CD8-positive, alpha-beta memory T cell (primary cell): ENCODE measurements at regions of chr19 and their contacts with region 1.

Region 1: DNA sequence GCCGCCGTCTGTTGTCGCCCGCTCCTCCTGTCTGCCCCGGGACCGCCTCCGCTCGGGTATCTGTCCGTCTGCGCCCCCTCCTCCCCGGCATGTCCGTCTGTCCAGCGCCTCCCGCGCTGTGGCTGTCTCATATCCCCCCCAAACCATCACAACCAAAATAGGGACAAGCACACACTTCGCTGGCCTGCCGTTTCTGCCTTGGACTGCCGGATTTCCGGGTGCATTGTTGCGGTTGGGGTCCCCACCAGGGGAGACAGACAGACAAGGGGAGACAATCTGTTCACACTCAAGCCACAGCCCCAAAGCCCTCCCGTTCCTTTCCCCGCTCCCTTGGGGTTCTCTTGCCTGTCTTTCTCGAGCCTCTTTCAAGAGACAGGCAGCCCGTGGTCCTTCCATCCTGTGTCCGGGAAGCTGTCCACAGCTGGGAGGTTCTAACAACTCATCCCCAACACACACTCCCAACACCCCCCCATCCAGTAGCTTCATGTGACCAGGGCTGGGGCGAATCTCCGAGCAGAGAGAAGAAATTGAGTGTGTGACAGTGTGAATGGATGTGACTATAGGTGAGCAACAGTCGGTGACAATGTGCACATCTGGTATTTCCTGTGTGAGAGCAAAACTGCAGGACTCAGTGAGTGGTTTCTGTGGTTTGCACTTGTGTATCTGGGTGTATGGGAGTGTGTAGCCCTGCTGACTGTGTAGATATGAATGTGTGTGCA is 16.5 kb upstream of the FOSB start:
- DNase-seq: peak; percentile 64 to 86 (median 77)
- H3K4me3 ChIP-seq: peak overlapping the region; percentile 87
- H3K4me3 Mint-ChIP-seq: peak overlapping the region; percentile 82 to 97 (median 91)
- H3K27ac ChIP-seq: peak overlapping the region; percentile 100
- H3K27ac Mint-ChIP-seq: peak overlapping the region; percentile 97 to 100 (median 100)
- H3K4me1 ChIP-seq: peaks cover 41% of the 10 kb centered on the region
- H3K4me1 Mint-ChIP-seq: peaks cover 55 to 67% (median 63%) of the 10 kb centered on the region in 3 donors
- H3K27me3 ChIP-seq: no peaks in the 10 kb centered on the region
- H3K27me3 Mint-ChIP-seq: peaks cover 0 to 13% of the 10 kb centered on the region in 2 donors

Region 2: GRCh38 chr19:45469132-45469944 is 18.0 kb after region 1 on chr19:
- CTCF ChIA-PET with region 1: interaction called, 15 read pairs
- POLR2A ChIA-PET with region 1: interaction called, 22 read pairs
- DNase-seq: peak; percentile 78 to 98 (median 93)
- H3K4me3 ChIP-seq: peak overlapping the region; percentile 96
- H3K4me3 Mint-ChIP-seq: peak overlapping the region; percentile 93 to 99 (median 95)
- H3K27ac ChIP-seq: peak overlapping the region; percentile 100
- H3K27ac Mint-ChIP-seq: peak overlapping the region; percentile 98 to 99 (median 99)
- H3K4me1 ChIP-seq: peaks cover 18% of the 10 kb centered on the region
- H3K4me1 Mint-ChIP-seq: peaks cover 26 to 53% (median 29%) of the 10 kb centered on the region in 3 donors
- H3K27me3 ChIP-seq: no peaks in the 10 kb centered on the region
- H3K27me3 Mint-ChIP-seq: peaks cover 10 to 61% of the 10 kb centered on the region in 2 donors

Region 3: DNA sequence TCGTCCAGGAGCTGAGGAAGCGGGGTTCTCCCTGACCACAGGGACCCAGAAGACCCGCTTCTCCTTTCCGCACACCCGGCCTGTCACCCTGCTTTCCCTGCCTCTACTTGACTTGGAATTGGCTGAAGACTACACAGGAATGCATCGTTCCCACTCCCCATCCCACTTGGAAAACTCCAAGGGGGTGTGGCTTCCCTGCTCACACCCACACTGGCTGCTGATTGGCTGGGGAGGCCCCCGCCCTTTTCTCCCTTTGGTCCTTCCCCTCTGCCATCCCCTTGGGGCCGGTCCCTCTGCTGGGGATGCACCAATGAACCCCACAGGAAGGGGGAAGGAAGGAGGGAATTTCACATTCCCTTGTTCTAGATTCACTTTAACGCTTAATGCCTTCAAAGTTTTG is 74.9 kb after region 1 on chr19:
- CTCF ChIA-PET with region 1: no interaction called
- POLR2A ChIA-PET with region 1: no interaction called
- DNase-seq: no peak
- H3K4me3 ChIP-seq: no peak overlapping the region
- H3K4me3 Mint-ChIP-seq: peak overlapping the region in 1 of 7 donors; percentile 44
- H3K27ac ChIP-seq: no peak overlapping the region
- H3K27ac Mint-ChIP-seq: no peak overlapping the region
- H3K4me1 ChIP-seq: peaks cover 9% of the 10 kb centered on the region
- H3K4me1 Mint-ChIP-seq: peaks cover 17 to 25% (median 19%) of the 10 kb centered on the region in 3 donors
- H3K27me3 ChIP-seq: no peaks in the 10 kb centered on the region
- H3K27me3 Mint-ChIP-seq: no peaks in the 10 kb centered on the region